ENCODE measurements at regions of chr2 and their contacts with region 1.

Region 1: DNA sequence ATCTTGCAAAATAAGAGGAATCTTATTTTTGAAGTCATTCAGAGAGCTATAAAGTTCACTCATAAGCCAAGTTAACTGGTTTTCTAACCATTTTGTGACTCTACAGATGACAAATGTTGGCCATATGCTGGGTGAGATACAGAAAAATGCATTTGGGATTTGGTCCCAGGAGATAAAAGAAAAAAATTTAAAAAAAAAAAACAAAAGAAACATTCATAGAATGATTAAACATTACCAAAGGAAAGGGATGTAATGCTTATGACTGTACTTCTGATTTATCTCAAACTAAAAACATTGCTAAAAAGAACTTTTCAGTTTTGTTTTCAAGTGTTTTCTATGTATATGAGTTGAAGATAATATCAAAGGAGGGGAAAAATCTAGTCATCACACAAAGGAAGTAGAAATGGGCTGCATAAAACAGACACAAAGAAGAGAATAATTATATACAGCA is 43.1 kb downstream of the PELI1 start:
- DNase-seq: no peak
- H3K4me3 Mint-ChIP-seq: peak overlapping the region; percentile 18
- H3K27ac Mint-ChIP-seq: peak overlapping the region; percentile 85
- H3K4me1 Mint-ChIP-seq: peaks cover 37% of the 10 kb centered on the region
- H3K27me3 Mint-ChIP-seq: no peaks in the 10 kb centered on the region

Region 2: GRCh38 chr2:64036034-64036705 is 65.0 kb before region 1 on chr2:
- intact Hi-C with region 1: loop called (anchors 1 kb)
- DNase-seq: peak; percentile 82
- H3K4me3 Mint-ChIP-seq: peak overlapping the region; percentile 22
- H3K27ac Mint-ChIP-seq: peak overlapping the region; percentile 76
- H3K4me1 Mint-ChIP-seq: peaks cover 42% of the 10 kb centered on the region
- H3K27me3 Mint-ChIP-seq: no peaks in the 10 kb centered on the region

Region 3: GRCh38 chr2:64114063-64114911 is 13.1 kb after region 1 on chr2:
- intact Hi-C with region 1: loop called (anchors 1 kb)
- DNase-seq: peak; percentile 74
- H3K4me3 Mint-ChIP-seq: peak overlapping the region; percentile 66
- H3K27ac Mint-ChIP-seq: peak overlapping the region; percentile 86
- H3K4me1 Mint-ChIP-seq: peaks cover 50% of the 10 kb centered on the region
- H3K27me3 Mint-ChIP-seq: no peaks in the 10 kb centered on the region

Region 4: DNA sequence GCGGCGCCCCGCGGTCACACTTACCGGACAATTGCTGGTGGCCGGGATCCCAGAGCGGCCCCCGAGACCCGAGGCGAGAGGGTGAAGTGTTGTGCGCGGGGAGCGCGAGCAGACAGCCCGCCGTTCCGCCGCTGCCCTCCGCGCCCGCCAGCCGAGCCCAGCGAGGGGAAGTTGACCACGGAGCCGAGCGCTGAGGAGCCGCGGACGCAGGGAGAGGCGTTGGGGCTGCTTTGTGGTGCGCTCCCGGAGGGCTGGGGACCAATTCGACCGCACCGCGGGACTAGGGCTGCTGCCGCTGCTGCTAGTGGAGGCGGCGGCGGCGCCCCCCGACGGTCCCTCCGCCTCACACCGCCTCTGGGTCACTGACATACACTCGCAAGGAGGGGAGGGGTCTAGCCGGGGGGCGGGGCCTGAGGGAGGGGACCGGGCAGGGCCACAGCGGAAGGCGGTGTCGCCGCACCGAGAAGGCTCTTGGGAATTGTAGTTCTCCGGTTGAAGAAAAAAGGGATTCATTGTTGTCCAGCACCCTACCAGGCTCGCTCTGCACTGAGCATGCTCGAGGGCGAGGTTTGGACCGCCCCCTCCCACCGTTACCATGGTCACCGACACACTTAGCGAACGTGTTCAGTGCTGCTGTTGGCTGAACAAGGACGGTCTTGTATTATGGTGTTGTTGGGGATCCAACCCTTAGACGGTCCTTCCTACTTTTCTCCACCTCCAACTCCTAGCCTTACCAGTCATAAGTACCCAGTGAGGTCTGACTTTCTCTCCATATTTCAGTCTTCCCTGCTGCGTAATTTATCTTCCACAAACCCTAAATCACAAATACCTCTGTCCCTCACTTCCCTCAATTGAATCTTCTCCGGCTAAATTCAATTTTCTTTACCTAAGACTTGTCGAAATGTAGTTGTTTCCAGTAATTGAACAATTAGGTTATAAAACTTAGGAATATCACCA is 43.2 kb after region 1 on chr2 and contains the start of gene PELI1:
- intact Hi-C with region 1: loop called (anchors 1 kb)
- DNase-seq: peak; percentile 97
- H3K4me3 Mint-ChIP-seq: peak within 1 kb of the TSS; percentile 99
- H3K27ac Mint-ChIP-seq: peak within 1 kb of the TSS; percentile 96
- H3K4me1 Mint-ChIP-seq: peaks cover 19% of the 10 kb centered on the region
- H3K27me3 Mint-ChIP-seq: no peaks in the 10 kb centered on the region
- total RNA-seq, gene PELI1: 31.9 and 33.8 TPM in 2 replicates

Region 5: GRCh38 chr2:64203858-64204632 is 102.9 kb after region 1 on chr2:
- intact Hi-C with region 1: loop called (anchors 1 kb)
- DNase-seq: peak; percentile 84
- H3K4me3 Mint-ChIP-seq: peak overlapping the region; percentile 75
- H3K27ac Mint-ChIP-seq: peak overlapping the region; percentile 75
- H3K4me1 Mint-ChIP-seq: peaks cover 71% of the 10 kb centered on the region
- H3K27me3 Mint-ChIP-seq: no peaks in the 10 kb centered on the region

Measured in activated CD4-positive, alpha-beta T cell treated with anti-CD3 and anti-CD28 coated beads, Interleukin-2, amount 10 ng/mL, durations not matched to agents 24 days and 14 days (primary cell).